ENCODE measurements at regions of chr11 and their contacts with region 1.

Region 1: DNA sequence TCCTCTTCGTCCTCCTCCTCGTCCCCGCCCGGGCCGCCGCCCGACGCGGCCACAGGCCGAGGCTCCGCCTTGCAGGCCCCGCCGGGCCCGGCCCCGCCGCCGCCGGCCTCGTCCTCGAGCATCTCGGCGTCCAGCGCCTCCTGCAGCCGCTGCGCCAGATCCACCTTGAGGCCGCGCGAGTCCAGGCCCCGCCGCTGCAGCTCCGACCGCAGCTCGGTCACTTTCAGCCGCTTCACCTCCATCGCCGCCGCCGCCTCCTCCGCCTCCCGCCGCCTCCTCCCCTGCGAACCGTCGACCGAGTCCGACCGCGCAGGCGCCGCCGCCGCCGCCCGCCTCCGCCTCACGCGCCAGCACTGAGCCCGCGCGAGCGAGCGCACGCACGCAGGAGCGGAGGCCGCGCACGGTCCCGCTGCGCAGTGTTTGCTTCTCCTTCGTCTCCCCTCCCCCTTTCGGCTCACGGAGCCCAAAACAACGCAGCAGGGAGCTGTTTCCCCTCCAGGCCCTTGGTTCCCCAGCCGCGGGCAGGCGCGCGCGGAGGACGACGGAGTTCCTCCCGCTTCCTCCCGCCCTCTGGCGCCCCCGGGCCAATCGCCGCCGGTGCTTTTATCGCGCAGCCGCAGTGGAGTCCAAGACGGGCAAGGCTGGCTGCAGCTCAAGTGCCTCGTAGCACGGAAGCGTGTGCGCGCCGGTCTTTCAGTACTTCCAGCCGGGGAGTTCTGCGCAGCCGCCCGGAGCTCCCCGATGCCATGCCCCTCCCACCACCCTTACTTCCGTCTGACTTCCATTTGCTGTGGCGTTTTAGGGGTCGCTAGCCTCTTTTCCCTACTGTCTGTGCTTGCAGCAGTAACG is at the start of gene HNRNPUL2:
- DNase-seq: peak; percentile 96 to 100 (median 98)
- ATAC-seq: peak; percentile 80
- H3K4me3 ChIP-seq: peak within 1 kb of the TSS; percentile 65
- H3K4me3 Mint-ChIP-seq: peak within 1 kb of the TSS; percentile 93
- H3K27ac ChIP-seq: peak within 1 kb of the TSS; percentile 93 to 97
- H3K27ac Mint-ChIP-seq: peak within 1 kb of the TSS; percentile 98
- H3K4me1 ChIP-seq: peaks cover 52% of the 10 kb centered on the region
- H3K4me1 Mint-ChIP-seq: peaks cover 73% of the 10 kb centered on the region
- H3K27me3 ChIP-seq: no peaks in the 10 kb centered on the region
- H3K27me3 Mint-ChIP-seq: no peaks in the 10 kb centered on the region
- CTCF ChIP-seq: no peak
- total RNA-seq, gene HNRNPUL2: 35.2 to 37.6 TPM

Region 2: DNA sequence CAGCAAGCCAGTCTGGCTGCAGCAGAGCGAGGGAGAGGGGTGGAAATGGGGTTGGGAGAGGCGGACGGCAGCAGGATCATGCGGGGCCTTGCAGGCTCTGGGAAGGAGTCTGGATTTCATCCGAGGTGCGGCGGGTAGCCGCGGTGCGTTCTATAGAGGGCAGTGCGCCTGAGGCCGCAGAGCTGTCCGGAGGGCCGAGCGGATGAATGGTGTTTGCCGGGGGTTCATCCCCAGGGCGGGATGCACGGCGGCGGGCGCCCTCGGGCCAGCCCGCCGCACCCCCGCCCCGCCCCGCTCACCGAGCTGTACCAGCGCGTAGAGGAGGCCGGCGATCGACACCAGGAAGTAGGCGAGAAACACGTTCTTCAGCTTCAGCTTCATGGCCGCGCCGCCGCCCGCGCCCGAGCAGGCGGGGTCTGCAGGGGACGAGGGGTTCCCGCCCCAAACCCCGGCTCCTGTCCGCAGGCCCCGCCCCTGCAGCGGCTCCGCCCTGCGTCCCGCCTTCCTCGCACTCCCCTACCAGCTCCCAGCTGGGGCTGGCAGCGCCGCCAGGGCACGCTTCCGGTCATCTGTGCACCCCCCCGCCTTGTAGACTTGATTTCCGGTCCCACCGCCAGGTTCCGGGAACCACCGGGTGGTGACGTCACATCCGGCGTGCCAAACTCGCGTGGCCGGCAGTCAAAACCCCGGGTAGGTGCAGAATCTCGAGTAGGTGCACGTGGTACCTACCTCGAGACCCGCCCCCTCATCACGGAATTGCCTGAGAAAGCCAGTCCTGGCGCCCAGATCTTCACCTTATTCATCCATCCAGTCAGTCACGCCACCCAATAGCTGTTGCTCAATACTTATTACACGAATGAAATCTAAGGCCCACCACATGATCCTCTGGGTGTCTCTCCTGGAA is 105.3 kb before region 1 on chr11 and contains the start of gene B3GAT3:
- CTCF ChIA-PET with region 1: no interaction called
- POLR2A ChIA-PET with region 1: interaction called, 13 read pairs
- intact Hi-C with region 1: no loop called
- DNase-seq: peak; percentile 91 to 99 (median 95)
- ATAC-seq: peak; percentile 82
- H3K4me3 ChIP-seq: peak within 1 kb of the TSS; percentile 69
- H3K4me3 Mint-ChIP-seq: peak within 1 kb of the TSS; percentile 95
- H3K27ac ChIP-seq: peak within 1 kb of the TSS; percentile 86 to 88
- H3K27ac Mint-ChIP-seq: peak within 1 kb of the TSS; percentile 89
- H3K4me1 ChIP-seq: peaks cover 32% of the 10 kb centered on the region
- H3K4me1 Mint-ChIP-seq: peaks cover 27% of the 10 kb centered on the region
- H3K27me3 ChIP-seq: no peaks in the 10 kb centered on the region
- H3K27me3 Mint-ChIP-seq: no peaks in the 10 kb centered on the region
- CTCF ChIP-seq: no peak
- total RNA-seq, gene B3GAT3: 47.2 to 49.5 TPM

Region 3: GRCh38 chr11:62705880-62706849 is 21.0 kb before region 1 on chr11:
- CTCF ChIA-PET with region 1: interaction called, 4 read pairs
- POLR2A ChIA-PET with region 1: interaction called, 165 read pairs
- intact Hi-C with region 1: loop called in 1 of 2 experiments (anchors 1 kb)
- DNase-seq: peak; percentile 90 to 97 (median 94)
- ATAC-seq: peak; percentile 62
- H3K4me3 ChIP-seq: peak overlapping the region; percentile 79
- H3K4me3 Mint-ChIP-seq: peak overlapping the region; percentile 86
- H3K27ac ChIP-seq: peak overlapping the region; percentile 65 to 84
- H3K27ac Mint-ChIP-seq: peak overlapping the region; percentile 92
- H3K4me1 ChIP-seq: peaks cover 49% of the 10 kb centered on the region
- H3K4me1 Mint-ChIP-seq: peaks cover 42% of the 10 kb centered on the region
- H3K27me3 ChIP-seq: no peaks in the 10 kb centered on the region
- H3K27me3 Mint-ChIP-seq: no peaks in the 10 kb centered on the region
- CTCF ChIP-seq: no peak

Region 4: GRCh38 chr11:62771144-62772021 is 44.2 kb after region 1 on chr11 and contains the start of gene TAF6L:
- CTCF ChIA-PET with region 1: interaction called, 3 read pairs
- POLR2A ChIA-PET with region 1: interaction called, 39 read pairs
- intact Hi-C with region 1: loop called (anchors 1 to 5 kb)
- DNase-seq: peak; percentile 81 to 95 (median 88)
- ATAC-seq: peak; percentile 76
- H3K4me3 ChIP-seq: peak within 1 kb of the TSS; percentile 76
- H3K4me3 Mint-ChIP-seq: peak within 1 kb of the TSS; percentile 97
- H3K27ac ChIP-seq: peak within 1 kb of the TSS; percentile 79 to 88
- H3K27ac Mint-ChIP-seq: peak within 1 kb of the TSS; percentile 97
- H3K4me1 ChIP-seq: peaks cover 27% of the 10 kb centered on the region
- H3K4me1 Mint-ChIP-seq: peaks cover 24% of the 10 kb centered on the region
- H3K27me3 ChIP-seq: no peaks in the 10 kb centered on the region
- H3K27me3 Mint-ChIP-seq: no peaks in the 10 kb centered on the region
- CTCF ChIP-seq: no peak
- total RNA-seq, gene TAF6L: 11.5 to 11.8 TPM

Region 5: DNA sequence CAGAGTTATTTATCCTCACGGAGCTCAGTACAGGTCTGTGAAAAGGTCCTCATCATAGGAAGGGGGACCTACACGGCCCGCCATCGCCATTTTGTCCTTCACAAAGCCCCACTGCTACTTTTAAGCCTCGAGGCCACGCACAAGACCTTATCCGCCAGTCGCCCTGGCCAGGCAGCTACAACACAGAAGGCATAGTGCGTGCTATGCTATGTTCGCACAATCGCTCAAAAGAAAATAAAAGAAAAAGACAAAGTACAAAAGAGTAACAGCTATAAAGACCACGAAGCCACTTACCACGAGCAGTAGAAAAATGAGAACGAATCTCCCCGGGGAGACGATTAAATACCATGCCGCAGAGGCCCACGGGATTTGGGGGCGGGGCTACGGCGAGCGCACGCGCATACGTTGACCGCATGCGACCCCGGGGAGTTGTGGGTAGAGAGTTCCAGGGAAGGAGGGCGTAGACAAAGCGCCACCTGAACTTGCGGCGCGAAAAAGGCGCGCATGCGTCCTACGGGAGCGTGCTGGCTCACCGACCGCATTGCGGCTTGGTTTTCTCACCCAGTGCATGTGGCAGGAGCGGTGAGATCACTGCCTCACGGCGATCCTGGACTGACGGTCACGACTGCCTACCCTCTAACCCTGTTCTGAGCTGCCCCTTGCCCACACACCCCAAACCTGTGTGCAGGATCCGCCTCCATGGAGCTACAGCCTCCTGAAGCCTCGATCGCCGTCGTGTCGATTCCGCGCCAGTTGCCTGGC is 128.6 kb after region 1 on chr11:
- CTCF ChIA-PET with region 1: no interaction called
- POLR2A ChIA-PET with region 1: interaction called, 79 read pairs
- intact Hi-C with region 1: loop called (anchors 1 to 2 kb)
- DNase-seq: peak; percentile 96 to 99 (median 98)
- ATAC-seq: peak; percentile 92
- H3K4me3 ChIP-seq: peak overlapping the region; percentile 79
- H3K4me3 Mint-ChIP-seq: peak overlapping the region; percentile 98
- H3K27ac ChIP-seq: peak overlapping the region; percentile 66 to 72
- H3K27ac Mint-ChIP-seq: peak overlapping the region; percentile 90
- H3K4me1 ChIP-seq: peaks cover 41% of the 10 kb centered on the region
- H3K4me1 Mint-ChIP-seq: peaks cover 63% of the 10 kb centered on the region
- H3K27me3 ChIP-seq: no peaks in the 10 kb centered on the region
- H3K27me3 Mint-ChIP-seq: no peaks in the 10 kb centered on the region
- CTCF ChIP-seq: no peak

Measured in CD4-positive, alpha-beta T cell (primary cell).